ENCODE measurements at regions of chr7 and their contacts with region 1.

Region 1: GRCh38 chr7:142782922-142783900 is 12.4 kb downstream of the PRSS2 start:
- DNase-seq: peak; percentile 90
- ATAC-seq: peak; percentile 94

Region 2: GRCh38 chr7:141960687-141961422 is 822.4 kb before region 1 on chr7:
- intact Hi-C with region 1: no loop called
- DNase-seq: no peak
- ATAC-seq: peak; percentile 34

Region 3: GRCh38 chr7:142632291-142633134 is 150.7 kb before region 1 on chr7:
- intact Hi-C with region 1: loop called (anchors 5 kb)
- DNase-seq: peak; percentile 55
- ATAC-seq: peak; percentile 72

Region 4: GRCh38 chr7:142711746-142712619 is 71.2 kb before region 1 on chr7:
- intact Hi-C with region 1: loop called (anchors 1 kb)
- DNase-seq: no peak
- ATAC-seq: peak; percentile 55

Measured in Right ventricle myocardium superior (tissue), 1 donor.